B cell (primary cell): ENCODE measurements at regions of chr9 and their contacts with region 1.

Region 1: DNA sequence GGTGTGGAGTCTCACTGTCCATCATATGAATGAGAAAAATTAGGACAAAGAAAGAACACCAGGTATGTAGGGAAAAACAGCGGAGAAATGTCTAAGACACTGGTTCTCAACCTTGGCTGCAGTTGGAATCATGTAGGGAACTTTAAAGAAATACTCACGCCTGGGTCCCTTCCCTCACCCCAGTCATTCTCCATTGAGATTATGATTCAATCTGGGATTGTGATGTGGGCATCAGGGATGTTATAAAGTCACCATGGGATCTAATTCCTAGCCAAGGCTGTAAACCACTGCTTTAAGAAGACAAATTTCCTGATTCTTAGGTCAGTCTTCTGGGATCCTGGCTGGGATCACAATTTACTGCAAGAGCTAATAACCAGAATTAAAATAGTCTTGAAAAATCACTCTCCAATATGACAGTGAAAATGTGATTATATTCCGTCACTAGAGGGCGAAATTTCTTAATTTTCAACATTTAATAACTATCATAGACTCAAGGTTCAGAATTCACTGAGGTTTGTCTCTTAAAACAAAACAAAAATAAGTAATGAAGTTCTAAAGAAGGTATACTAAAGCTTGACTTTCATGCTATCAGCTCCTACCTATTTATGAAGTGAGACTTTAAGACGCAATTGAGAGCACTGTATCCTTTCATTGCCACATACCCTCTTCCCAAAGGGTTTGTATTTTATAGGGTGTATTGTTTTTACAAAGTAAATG is 60.5 kb downstream of the GLDC start:
- DNase-seq: peak; percentile 68
- ATAC-seq: peak; percentile 28
- H3K4me3 ChIP-seq: no peak overlapping the region
- H3K4me3 Mint-ChIP-seq: no peak overlapping the region
- H3K27ac ChIP-seq: no peak overlapping the region
- H3K27ac Mint-ChIP-seq: no peak overlapping the region
- H3K4me1 ChIP-seq: peaks cover 33% of the 10 kb centered on the region in 2 donors
- H3K4me1 Mint-ChIP-seq: peaks cover 44% of the 10 kb centered on the region
- H3K27me3 ChIP-seq: no peaks in the 10 kb centered on the region
- H3K27me3 Mint-ChIP-seq: no peaks in the 10 kb centered on the region
- CTCF ChIP-seq: peak; percentile 75

Region 2: GRCh38 chr9:6428940-6429889 is 155.8 kb before region 1 on chr9:
- CTCF ChIA-PET with region 1: no interaction called
- POLR2A ChIA-PET with region 1: no interaction called
- intact Hi-C with region 1: no loop called
- DNase-seq: peak; percentile 67
- ATAC-seq: peak; percentile 87
- H3K4me3 ChIP-seq: no peak overlapping the region
- H3K4me3 Mint-ChIP-seq: peak overlapping the region; percentile 67
- H3K27ac ChIP-seq: peak overlapping the region; percentile 37 to 60
- H3K27ac Mint-ChIP-seq: peak overlapping the region; percentile 87
- H3K4me1 ChIP-seq: peaks cover 51 to 59% of the 10 kb centered on the region in 2 donors
- H3K4me1 Mint-ChIP-seq: peaks cover 82% of the 10 kb centered on the region
- H3K27me3 ChIP-seq: no peaks in the 10 kb centered on the region
- H3K27me3 Mint-ChIP-seq: no peaks in the 10 kb centered on the region
- CTCF ChIP-seq: no peak

Region 3: DNA sequence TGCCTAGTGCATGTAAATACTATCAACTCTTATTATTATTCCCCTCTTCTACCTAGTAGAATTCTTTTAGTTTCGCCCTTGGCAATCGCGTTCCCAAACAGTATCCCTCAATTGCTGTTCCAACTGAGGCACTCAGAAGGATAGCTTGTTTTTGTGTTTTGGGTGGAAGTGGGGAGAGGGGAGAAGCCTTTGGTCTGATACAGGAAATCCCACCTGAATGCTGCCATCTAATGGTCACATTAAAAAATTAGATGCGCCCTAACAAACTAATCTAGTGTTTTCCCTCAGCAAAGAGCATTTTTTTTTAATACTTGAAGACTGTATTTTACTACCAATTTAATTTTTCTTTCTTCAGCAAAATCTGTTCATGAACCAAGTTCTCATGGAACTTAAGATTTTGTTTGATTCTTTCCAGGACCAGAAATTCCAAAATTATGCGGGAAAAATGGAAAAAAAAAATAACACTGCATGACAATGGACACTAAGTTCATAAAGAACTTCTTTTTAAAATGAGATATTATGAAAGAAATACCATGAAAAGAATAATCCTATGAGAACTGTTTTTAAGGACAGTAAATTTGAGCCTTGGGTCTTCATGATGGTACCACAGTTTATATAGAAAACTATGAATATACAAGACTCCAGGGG is 82.7 kb after region 1 on chr9:
- CTCF ChIA-PET with region 1: interaction called, 28 read pairs
- POLR2A ChIA-PET with region 1: no interaction called
- intact Hi-C with region 1: loop called (anchors 1 kb)
- DNase-seq: peak; percentile 59
- ATAC-seq: peak; percentile 33
- H3K4me3 ChIP-seq: no peak overlapping the region
- H3K4me3 Mint-ChIP-seq: no peak overlapping the region
- H3K27ac ChIP-seq: no peak overlapping the region
- H3K27ac Mint-ChIP-seq: no peak overlapping the region
- H3K4me1 ChIP-seq: no peaks in the 10 kb centered on the region
- H3K4me1 Mint-ChIP-seq: peaks cover 4% of the 10 kb centered on the region
- H3K27me3 ChIP-seq: no peaks in the 10 kb centered on the region
- H3K27me3 Mint-ChIP-seq: no peaks in the 10 kb centered on the region
- CTCF ChIP-seq: peak; percentile 75

Region 4: DNA sequence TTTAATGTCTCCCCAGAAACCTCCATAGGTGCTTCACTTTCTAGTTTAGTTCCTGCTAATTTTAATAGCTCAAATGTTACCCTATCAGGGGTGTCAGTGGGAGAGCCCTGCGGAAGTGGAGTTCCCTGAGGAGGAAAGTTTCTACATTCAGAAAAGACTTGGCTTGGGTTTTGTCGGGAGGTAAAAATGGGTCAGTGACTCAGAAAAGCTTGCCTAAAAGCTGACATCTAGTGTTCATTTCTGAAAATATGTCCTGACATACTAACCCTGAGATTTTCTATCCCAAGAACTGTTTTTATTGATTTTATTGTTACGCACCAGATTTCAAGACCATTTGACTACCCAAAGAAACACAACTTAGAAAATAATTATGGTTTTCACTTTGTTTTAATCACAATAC is 101.4 kb after region 1 on chr9:
- CTCF ChIA-PET with region 1: interaction called, 22 read pairs
- POLR2A ChIA-PET with region 1: no interaction called
- intact Hi-C with region 1: loop called (anchors 2 kb)
- DNase-seq: no peak
- ATAC-seq: no peak
- H3K4me3 ChIP-seq: no peak overlapping the region
- H3K4me3 Mint-ChIP-seq: no peak overlapping the region
- H3K27ac ChIP-seq: peak overlapping the region; percentile 32 to 53
- H3K27ac Mint-ChIP-seq: peak overlapping the region; percentile 28
- H3K4me1 ChIP-seq: peaks cover 62 to 89% of the 10 kb centered on the region in 2 donors
- H3K4me1 Mint-ChIP-seq: peaks cover 48% of the 10 kb centered on the region
- H3K27me3 ChIP-seq: no peaks in the 10 kb centered on the region
- H3K27me3 Mint-ChIP-seq: no peaks in the 10 kb centered on the region
- CTCF ChIP-seq: peak; percentile 23

Region 5: GRCh38 chr9:6739218-6739617 is 154.2 kb after region 1 on chr9:
- CTCF ChIA-PET with region 1: interaction called, 38 read pairs
- POLR2A ChIA-PET with region 1: no interaction called
- intact Hi-C with region 1: loop called (anchors 1 kb)
- DNase-seq: peak; percentile 17
- ATAC-seq: no peak
- H3K4me3 ChIP-seq: no peak overlapping the region
- H3K4me3 Mint-ChIP-seq: no peak overlapping the region
- H3K27ac ChIP-seq: no peak overlapping the region
- H3K27ac Mint-ChIP-seq: no peak overlapping the region
- H3K4me1 ChIP-seq: peaks cover 8 to 9% of the 10 kb centered on the region in 2 donors
- H3K4me1 Mint-ChIP-seq: peaks cover 8% of the 10 kb centered on the region
- H3K27me3 ChIP-seq: no peaks in the 10 kb centered on the region
- H3K27me3 Mint-ChIP-seq: no peaks in the 10 kb centered on the region
- CTCF ChIP-seq: no peak